CD8-positive, alpha-beta T cell (primary cell): ENCODE measurements at regions of chr4 and their contacts with region 1.

Region 1: DNA sequence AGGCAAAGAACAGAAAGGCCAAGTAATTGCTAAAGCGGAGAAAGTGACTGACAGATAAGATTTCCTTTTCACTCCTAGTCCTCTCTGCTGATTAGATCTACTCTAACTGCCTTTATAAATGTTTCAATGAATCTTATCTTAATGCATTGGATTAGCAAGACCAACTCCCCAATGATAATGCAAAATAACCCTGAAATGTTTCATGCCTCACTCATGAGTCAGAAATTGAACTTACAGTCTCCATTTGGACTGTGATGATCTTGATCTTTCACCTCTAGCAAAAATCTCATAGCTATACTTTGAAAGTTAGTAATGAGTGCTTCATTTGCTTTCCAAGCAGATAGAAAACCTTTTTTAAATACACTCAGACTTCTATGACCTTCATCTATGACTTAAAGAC is 26.5 kb downstream of the SLC10A7 start:
- DNase-seq: no peak
- ATAC-seq: no peak
- H3K4me3 ChIP-seq: no peak overlapping the region
- H3K4me3 Mint-ChIP-seq: no peak overlapping the region
- H3K27ac ChIP-seq: no peak overlapping the region
- H3K27ac Mint-ChIP-seq: no peak overlapping the region
- H3K4me1 ChIP-seq: no peaks in the 10 kb centered on the region
- H3K4me1 Mint-ChIP-seq: peaks cover 25% of the 10 kb centered on the region
- H3K27me3 ChIP-seq: no peaks in the 10 kb centered on the region
- H3K27me3 Mint-ChIP-seq: no peaks in the 10 kb centered on the region
- CTCF ChIP-seq: no peak

Region 2: DNA sequence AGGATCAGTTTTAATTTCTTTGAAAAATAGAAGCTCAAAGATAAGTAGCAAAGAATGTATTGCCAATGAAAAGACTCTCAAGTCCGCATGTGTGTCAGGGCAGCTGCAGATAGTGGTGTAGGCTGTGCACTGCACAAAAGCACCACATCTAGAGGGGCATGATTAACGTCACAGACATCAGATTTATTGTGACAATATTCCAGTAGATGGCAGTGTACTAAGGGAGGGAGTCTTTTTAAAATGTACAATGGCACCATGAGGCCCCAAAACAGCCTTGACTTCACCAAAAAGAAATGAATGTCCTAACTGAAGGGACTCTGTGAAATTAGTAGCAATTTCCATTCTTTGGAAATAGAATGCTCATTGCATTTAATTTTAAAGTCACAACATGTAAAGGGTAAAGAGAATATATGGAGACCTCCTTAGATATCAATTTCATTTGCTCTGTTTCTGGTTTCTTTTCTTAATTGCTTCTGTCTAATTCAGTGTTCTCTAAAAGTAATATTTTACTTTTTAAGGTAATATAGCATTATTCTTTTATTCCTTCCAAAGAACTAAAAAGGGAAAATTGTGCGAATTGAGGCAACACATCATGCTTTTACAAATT is 655.0 kb before region 1 on chr4:
- CTCF ChIA-PET with region 1: no interaction called
- POLR2A ChIA-PET with region 1: no interaction called
- intact Hi-C with region 1: no loop called
- DNase-seq: peak in 2 of 9 experiments; percentile 39 to 57
- ATAC-seq: peak; percentile 84
- H3K4me3 ChIP-seq: no peak overlapping the region
- H3K4me3 Mint-ChIP-seq: no peak overlapping the region
- H3K27ac ChIP-seq: no peak overlapping the region
- H3K27ac Mint-ChIP-seq: no peak overlapping the region
- H3K4me1 ChIP-seq: peaks cover 11% of the 10 kb centered on the region
- H3K4me1 Mint-ChIP-seq: peaks cover 24% of the 10 kb centered on the region
- H3K27me3 ChIP-seq: no peaks in the 10 kb centered on the region
- H3K27me3 Mint-ChIP-seq: no peaks in the 10 kb centered on the region
- CTCF ChIP-seq: peak; percentile 31

Region 3: DNA sequence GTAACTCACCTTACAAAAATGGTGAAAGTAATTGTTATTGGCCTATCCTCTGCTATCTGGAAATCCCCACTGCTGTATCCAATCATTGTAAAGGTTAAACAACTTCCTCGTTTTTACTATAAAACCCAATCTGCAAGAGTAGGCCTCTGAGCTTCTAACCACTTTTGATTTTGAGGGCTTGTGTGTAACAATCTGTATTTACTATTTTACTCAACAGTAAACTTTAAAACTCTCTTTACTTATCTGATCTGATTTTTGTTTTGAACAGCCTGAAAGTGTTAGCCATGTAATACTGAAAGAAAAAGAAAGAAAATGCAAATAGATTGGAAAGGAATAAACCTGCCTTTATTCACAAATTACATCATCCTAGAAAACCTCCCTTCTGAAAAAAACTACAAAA is 36.7 kb before region 1 on chr4:
- CTCF ChIA-PET with region 1: no interaction called
- POLR2A ChIA-PET with region 1: no interaction called
- intact Hi-C with region 1: loop called in 1 of 2 experiments (anchors 5 kb)
- DNase-seq: peak in 2 of 9 experiments; percentile 42 to 67
- ATAC-seq: peak; percentile 97
- H3K4me3 ChIP-seq: no peak overlapping the region
- H3K4me3 Mint-ChIP-seq: peak overlapping the region; percentile 52
- H3K27ac ChIP-seq: peak overlapping the region in 1 of 2 experiments; percentile 63
- H3K27ac Mint-ChIP-seq: peak overlapping the region; percentile 83
- H3K4me1 ChIP-seq: peaks cover 11% of the 10 kb centered on the region
- H3K4me1 Mint-ChIP-seq: peaks cover 23% of the 10 kb centered on the region
- H3K27me3 ChIP-seq: no peaks in the 10 kb centered on the region
- H3K27me3 Mint-ChIP-seq: no peaks in the 10 kb centered on the region
- CTCF ChIP-seq: no peak